CD8-positive, alpha-beta memory T cell (primary cell): ENCODE measurements at regions of chr11 and their contacts with region 1.

Region 1: DNA sequence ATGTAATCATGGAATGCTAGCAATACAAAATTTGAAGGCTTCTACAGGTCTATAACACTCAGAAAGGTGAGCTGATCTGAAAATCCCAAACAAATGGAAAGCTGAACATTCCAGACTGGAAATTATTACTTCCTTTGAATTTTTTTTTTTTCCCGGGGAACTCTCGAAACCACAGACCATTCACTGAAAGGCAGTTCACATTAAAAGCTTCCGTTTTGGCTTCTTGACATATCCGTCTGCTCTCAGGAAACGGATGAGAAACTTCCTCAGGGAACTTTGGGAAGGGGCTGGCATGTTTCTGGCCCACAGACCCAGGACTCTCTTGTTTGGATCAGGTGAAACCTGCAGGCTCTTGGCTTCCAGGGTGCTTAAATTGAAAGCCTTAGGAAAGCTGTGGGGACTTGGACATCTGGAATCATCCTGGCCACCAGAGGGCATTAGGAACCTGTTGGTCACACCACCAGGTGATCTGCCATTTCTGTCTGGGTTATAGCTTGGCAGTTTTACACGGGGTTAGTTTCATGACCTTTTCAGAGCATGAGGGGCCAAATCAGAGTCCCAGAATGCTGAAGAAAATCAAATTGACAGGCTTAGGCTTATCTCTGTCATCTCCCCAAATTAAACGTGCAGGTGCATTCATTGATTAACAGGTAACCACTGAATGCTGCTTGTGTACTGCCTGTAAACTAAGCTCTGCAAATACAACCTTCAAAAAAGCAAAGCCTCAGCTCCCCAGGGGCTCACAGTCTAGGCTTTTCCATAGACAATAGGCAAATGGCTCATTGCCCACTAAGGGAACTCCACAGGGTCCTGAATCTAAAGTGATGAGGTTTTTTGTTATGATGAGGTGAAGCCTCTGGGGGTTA is 22.7 kb upstream of the GRAMD1B start:
- DNase-seq: peak; percentile 35 to 80 (median 43)
- H3K4me3 ChIP-seq: no peak overlapping the region
- H3K4me3 Mint-ChIP-seq: peak overlapping the region in 1 of 7 donors; percentile 19
- H3K27ac ChIP-seq: no peak overlapping the region
- H3K27ac Mint-ChIP-seq: no peak overlapping the region
- H3K4me1 ChIP-seq: no peaks in the 10 kb centered on the region
- H3K4me1 Mint-ChIP-seq: peaks cover 0 to 6% (median 5%) of the 10 kb centered on the region in 3 donors
- H3K27me3 ChIP-seq: no peaks in the 10 kb centered on the region
- H3K27me3 Mint-ChIP-seq: peaks cover 1 to 2% of the 10 kb centered on the region in 2 donors

Region 2: DNA sequence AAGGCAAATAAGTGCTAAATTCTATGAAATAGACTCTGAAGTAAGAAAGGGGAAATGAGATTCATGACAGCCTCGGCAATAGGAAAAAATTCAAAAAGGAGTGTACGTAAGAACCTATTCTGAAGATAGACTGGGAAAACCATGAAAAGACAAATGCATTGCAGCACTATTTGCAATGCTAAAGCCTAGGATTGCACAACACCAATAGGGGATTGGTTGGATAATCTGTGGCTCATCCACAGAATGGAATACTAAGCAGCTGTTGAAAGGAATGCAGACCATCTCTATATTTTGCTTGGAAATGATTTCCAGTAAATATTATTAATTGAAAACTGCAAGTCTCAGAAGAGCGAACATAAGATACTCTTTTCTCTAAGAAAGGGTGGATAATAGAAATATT is 120.6 kb before region 1 on chr11:
- CTCF ChIA-PET with region 1: no interaction called
- POLR2A ChIA-PET with region 1: no interaction called
- DNase-seq: no peak
- H3K4me3 ChIP-seq: no peak overlapping the region
- H3K4me3 Mint-ChIP-seq: no peak overlapping the region
- H3K27ac ChIP-seq: no peak overlapping the region
- H3K27ac Mint-ChIP-seq: no peak overlapping the region
- H3K4me1 ChIP-seq: no peaks in the 10 kb centered on the region
- H3K4me1 Mint-ChIP-seq: no peaks in the 10 kb centered on the region
- H3K27me3 ChIP-seq: peaks cover 4% of the 10 kb centered on the region
- H3K27me3 Mint-ChIP-seq: peaks cover 8 to 38% of the 10 kb centered on the region in 2 donors

Region 3: DNA sequence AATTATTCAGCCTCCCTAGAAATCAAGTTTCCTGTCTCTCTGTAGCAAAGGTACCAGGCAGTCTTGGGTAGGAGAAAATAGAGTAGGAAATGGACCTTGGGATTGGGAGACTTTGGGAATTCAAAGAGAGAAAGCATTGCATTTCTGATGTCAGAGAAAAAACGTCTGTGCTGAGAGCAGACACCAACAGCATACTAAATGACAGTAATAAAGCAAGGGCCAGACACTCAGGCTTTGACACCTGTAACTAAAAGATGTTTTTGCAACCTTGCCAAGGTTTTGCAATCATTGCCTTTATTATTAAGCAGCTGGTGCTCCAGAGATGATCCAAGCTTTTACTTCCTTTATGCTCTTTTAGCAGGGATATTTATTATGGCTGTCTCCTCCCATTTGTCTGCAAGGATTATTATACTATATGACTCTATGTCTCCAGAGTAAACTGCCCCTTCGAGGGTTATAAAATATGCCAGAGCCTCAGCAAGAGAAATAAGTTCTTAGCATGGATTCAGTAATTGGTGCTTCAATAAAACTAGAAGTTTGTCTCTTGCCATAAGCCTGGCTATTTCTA is 62.5 kb before region 1 on chr11:
- CTCF ChIA-PET with region 1: no interaction called
- POLR2A ChIA-PET with region 1: no interaction called
- DNase-seq: no peak
- H3K4me3 ChIP-seq: no peak overlapping the region
- H3K4me3 Mint-ChIP-seq: no peak overlapping the region
- H3K27ac ChIP-seq: no peak overlapping the region
- H3K27ac Mint-ChIP-seq: peak overlapping the region in 1 of 8 donors; percentile 25
- H3K4me1 ChIP-seq: no peaks in the 10 kb centered on the region
- H3K4me1 Mint-ChIP-seq: no peaks in the 10 kb centered on the region
- H3K27me3 ChIP-seq: no peaks in the 10 kb centered on the region
- H3K27me3 Mint-ChIP-seq: peaks cover 0 to 13% of the 10 kb centered on the region in 2 donors

Region 4: GRCh38 chr11:123366924-123367323 is 40.4 kb before region 1 on chr11:
- CTCF ChIA-PET with region 1: no interaction called
- POLR2A ChIA-PET with region 1: no interaction called
- DNase-seq: no peak
- H3K4me3 ChIP-seq: no peak overlapping the region
- H3K4me3 Mint-ChIP-seq: no peak overlapping the region
- H3K27ac ChIP-seq: no peak overlapping the region
- H3K27ac Mint-ChIP-seq: no peak overlapping the region
- H3K4me1 ChIP-seq: no peaks in the 10 kb centered on the region
- H3K4me1 Mint-ChIP-seq: peaks cover 0 to 11% (median 1%) of the 10 kb centered on the region in 3 donors
- H3K27me3 ChIP-seq: no peaks in the 10 kb centered on the region
- H3K27me3 Mint-ChIP-seq: peaks cover 3 to 13% of the 10 kb centered on the region in 2 donors

Region 5: GRCh38 chr11:123378096-123378495 is 29.3 kb before region 1 on chr11:
- CTCF ChIA-PET with region 1: no interaction called
- POLR2A ChIA-PET with region 1: no interaction called
- DNase-seq: no peak
- H3K4me3 ChIP-seq: no peak overlapping the region
- H3K4me3 Mint-ChIP-seq: no peak overlapping the region
- H3K27ac ChIP-seq: no peak overlapping the region
- H3K27ac Mint-ChIP-seq: no peak overlapping the region
- H3K4me1 ChIP-seq: peaks cover 4% of the 10 kb centered on the region
- H3K4me1 Mint-ChIP-seq: peaks cover 7 to 17% (median 10%) of the 10 kb centered on the region in 3 donors
- H3K27me3 ChIP-seq: no peaks in the 10 kb centered on the region
- H3K27me3 Mint-ChIP-seq: no peaks in the 10 kb centered on the region

Region 6: DNA sequence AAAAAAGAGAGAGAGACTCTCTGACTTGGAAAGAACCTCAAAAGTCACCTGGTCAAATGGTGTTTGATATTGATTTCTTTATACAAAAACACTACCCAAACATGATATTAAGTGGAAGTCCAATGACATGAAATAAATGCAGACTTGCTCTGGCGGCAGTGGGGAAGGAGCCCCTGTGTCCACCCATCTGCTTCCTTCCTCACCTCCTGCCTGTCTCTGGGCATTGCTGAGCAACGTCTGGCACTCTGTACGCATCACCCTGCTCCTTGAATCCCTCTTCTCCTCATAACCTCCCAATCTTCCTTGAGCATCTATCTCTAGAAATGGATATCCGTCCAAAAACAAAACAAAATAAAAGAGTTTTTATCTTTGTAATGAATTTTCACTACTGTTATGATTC is 17.2 kb before region 1 on chr11:
- CTCF ChIA-PET with region 1: interaction called, 10 read pairs
- POLR2A ChIA-PET with region 1: no interaction called
- DNase-seq: no peak
- H3K4me3 ChIP-seq: no peak overlapping the region
- H3K4me3 Mint-ChIP-seq: no peak overlapping the region
- H3K27ac ChIP-seq: no peak overlapping the region
- H3K27ac Mint-ChIP-seq: no peak overlapping the region
- H3K4me1 ChIP-seq: no peaks in the 10 kb centered on the region
- H3K4me1 Mint-ChIP-seq: no peaks in the 10 kb centered on the region
- H3K27me3 ChIP-seq: no peaks in the 10 kb centered on the region
- H3K27me3 Mint-ChIP-seq: no peaks in the 10 kb centered on the region

Region 7: DNA sequence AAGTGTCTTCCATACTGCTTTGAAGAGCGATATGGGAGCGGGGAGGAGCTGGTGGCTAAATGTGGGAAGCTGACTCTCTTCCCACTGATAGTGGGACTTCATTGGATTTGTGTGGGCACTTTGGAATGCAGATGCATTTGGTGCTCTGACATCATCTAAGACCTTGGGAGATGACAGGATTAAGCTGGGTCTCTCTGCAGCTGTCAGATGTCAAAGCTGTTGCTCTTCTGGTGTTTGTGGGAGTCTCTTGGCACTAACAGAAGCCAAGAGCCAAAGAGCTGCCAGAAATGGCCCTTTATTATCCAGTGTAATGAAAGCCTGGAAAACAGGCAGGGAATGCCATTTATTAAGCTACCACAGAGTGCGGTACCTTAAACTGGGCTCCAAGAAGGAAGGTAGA is 43.3 kb after region 1 on chr11:
- CTCF ChIA-PET with region 1: interaction called, 17 read pairs
- POLR2A ChIA-PET with region 1: no interaction called
- DNase-seq: no peak
- H3K4me3 ChIP-seq: no peak overlapping the region
- H3K4me3 Mint-ChIP-seq: no peak overlapping the region
- H3K27ac ChIP-seq: no peak overlapping the region
- H3K27ac Mint-ChIP-seq: peak overlapping the region in 1 of 8 donors; percentile 50
- H3K4me1 ChIP-seq: peaks cover 11% of the 10 kb centered on the region
- H3K4me1 Mint-ChIP-seq: peaks cover 18 to 31% (median 26%) of the 10 kb centered on the region in 3 donors
- H3K27me3 ChIP-seq: no peaks in the 10 kb centered on the region
- H3K27me3 Mint-ChIP-seq: no peaks in the 10 kb centered on the region

Region 8: GRCh38 chr11:123478352-123478987 is 71.1 kb after region 1 on chr11:
- CTCF ChIA-PET with region 1: interaction called, 152 read pairs
- POLR2A ChIA-PET with region 1: interaction called, 6 read pairs
- DNase-seq: peak in 4 of 5 donors; percentile 15 to 49 (median 46)
- H3K4me3 ChIP-seq: no peak overlapping the region
- H3K4me3 Mint-ChIP-seq: peak overlapping the region in 6 of 7 donors; percentile 13 to 72 (median 50)
- H3K27ac ChIP-seq: no peak overlapping the region
- H3K27ac Mint-ChIP-seq: peak overlapping the region in 6 of 8 donors; percentile 33 to 71 (median 62)
- H3K4me1 ChIP-seq: no peaks in the 10 kb centered on the region
- H3K4me1 Mint-ChIP-seq: peaks cover 24 to 45% (median 35%) of the 10 kb centered on the region in 3 donors
- H3K27me3 ChIP-seq: no peaks in the 10 kb centered on the region
- H3K27me3 Mint-ChIP-seq: peaks cover 0 to 3% of the 10 kb centered on the region in 2 donors

Region 9: GRCh38 chr11:123580557-123581275 is 173.4 kb after region 1 on chr11:
- CTCF ChIA-PET with region 1: interaction called, 10 read pairs
- POLR2A ChIA-PET with region 1: no interaction called
- DNase-seq: peak; percentile 38 to 73 (median 51)
- H3K4me3 ChIP-seq: no peak overlapping the region
- H3K4me3 Mint-ChIP-seq: peak overlapping the region in 5 of 7 donors; percentile 22 to 62 (median 45)
- H3K27ac ChIP-seq: no peak overlapping the region
- H3K27ac Mint-ChIP-seq: peak overlapping the region in 1 of 8 donors; percentile 54
- H3K4me1 ChIP-seq: peaks cover 7% of the 10 kb centered on the region
- H3K4me1 Mint-ChIP-seq: peaks cover 17 to 27% (median 21%) of the 10 kb centered on the region in 3 donors
- H3K27me3 ChIP-seq: no peaks in the 10 kb centered on the region
- H3K27me3 Mint-ChIP-seq: no peaks in the 10 kb centered on the region